ENCODE measurements at regions of chr14 and their contacts with region 1.

Region 1: DNA sequence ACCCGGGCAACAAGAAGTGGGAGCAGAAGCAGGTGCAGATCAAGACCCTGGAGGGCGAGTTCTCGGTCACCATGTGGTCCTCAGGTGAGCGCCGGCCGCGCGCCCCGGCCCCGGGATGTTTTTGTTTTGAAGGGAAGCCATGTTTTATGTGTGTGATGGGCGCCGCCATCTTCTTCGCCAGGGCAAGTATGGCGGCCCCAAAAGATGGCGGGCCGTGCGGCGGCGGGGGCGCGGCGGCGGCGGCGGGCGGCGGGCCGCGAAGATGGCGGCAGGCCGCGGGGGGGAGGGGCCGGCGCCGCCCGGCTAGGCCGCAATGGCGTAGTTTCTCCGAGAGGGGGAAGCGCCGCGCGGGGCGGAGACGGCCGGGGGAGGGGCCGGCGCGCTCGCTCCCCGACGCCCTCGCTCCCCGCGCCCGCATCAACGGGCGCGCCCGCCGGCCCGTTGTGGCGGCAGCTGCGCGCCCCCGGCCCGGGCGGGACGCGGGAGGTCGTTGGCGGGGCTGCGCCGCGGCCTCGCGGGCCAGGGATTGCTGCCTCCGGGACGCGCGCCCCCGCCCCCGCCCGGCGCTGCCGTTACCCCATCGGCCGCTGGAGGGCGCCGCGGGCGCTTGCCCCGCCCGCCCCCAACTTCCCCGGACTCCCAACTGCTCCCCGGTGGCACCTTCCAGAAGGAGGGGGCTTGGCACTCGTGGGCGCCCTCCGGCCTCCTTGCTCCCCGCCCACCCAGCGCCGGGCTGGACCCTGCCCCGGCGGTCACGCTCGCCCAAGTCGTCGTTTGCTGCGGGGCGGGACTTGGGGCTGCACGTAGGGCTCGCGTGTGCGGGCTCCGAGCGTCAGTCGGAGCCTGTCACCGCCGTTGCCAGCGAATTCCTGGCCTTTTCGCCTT is 1.1 kb downstream of the YY1 start:
- DNase-seq: peak; percentile 87 to 95
- H3K4me3 ChIP-seq: peak overlapping the region; percentile 96 to 99
- H3K27ac ChIP-seq: peak overlapping the region; percentile 87 to 97
- H3K4me1 ChIP-seq: peaks cover 0 to 69% (median 51%) of the 10 kb centered on the region in 4 donors
- H3K27me3 ChIP-seq: no peaks in the 10 kb centered on the region
- CTCF ChIP-seq: peak; percentile 69 to 78

Region 2: DNA sequence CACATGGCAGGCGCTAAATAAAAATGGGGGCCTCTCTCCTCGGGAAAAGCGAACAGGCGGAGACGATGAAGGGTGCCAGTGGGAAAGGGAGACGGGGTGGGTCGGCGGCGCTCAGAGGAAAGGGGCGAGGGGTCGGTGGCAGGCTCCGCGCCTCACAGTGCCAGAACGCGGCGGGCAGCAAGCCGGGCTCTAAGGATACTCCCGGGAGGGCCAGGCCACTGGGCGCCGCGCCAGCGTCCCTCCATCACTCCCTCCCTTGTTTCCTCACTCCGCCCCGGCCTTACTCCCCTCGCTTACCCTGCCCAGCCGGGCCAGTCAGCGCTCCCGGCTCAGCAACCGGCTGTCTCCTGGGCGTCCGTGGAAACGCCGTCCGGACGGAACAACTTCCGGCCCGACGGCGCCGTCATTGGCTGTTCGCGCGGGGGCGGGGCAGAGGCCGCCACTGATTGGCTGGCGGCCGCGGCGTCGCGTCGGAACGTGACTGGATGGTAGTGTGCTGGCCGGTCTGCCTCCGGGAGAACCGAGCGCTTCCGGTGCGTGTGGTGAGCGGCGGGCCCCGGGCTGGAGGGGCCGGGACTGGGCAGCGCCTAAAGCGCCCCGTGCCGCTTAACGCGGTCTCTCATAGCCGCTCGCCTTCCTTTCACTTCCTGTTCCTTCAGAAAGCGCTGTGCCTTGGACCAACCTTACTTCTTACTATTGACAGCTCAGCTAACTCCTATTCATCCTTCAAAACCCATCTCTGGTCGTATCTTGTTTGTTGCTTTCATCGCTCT is 136.1 kb after region 1 on chr14:
- intact Hi-C with region 1: loop called (anchors 5 kb)
- DNase-seq: peak; percentile 93 to 98
- H3K4me3 ChIP-seq: peak within 1 kb of the TSS; percentile 72 to 76
- H3K27ac ChIP-seq: peak within 1 kb of the TSS; percentile 87 to 91
- H3K4me1 ChIP-seq: peaks cover 0 to 31% (median 23%) of the 10 kb centered on the region in 4 donors
- H3K27me3 ChIP-seq: no peaks in the 10 kb centered on the region
- CTCF ChIP-seq: no peak

Region 3: DNA sequence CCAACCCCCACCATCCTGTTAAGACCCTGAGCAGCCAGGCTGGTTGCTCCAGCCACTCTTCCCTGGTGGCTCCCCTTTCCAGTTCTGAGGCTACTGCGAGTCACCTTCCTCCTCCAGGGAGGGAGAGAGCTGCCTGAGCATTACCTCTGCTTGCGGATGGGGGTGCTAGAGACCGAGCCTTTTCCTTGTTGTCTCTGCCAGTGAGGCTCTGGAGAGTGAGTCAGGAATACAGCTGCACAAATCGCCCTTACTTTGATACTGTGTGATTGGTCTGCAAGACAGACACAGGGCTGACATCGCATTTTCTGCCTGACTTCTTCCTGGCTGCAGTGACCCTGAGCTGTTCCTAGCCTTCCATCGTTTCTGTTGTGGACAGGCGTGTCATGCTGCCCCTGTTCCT is 177.4 kb after region 1 on chr14:
- intact Hi-C with region 1: no loop called
- DNase-seq: no peak
- H3K4me3 ChIP-seq: no peak overlapping the region
- H3K27ac ChIP-seq: no peak overlapping the region
- H3K4me1 ChIP-seq: no peaks in the 10 kb centered on the region
- H3K27me3 ChIP-seq: no peaks in the 10 kb centered on the region
- CTCF ChIP-seq: no peak